MCF 10A (cell line): ENCODE measurements at regions of chrX and their contacts with region 1.

Region 1: GRCh38 chrX:13750204-13750603 is 15.7 kb downstream of the OFD1 start:
- DNase-seq: peak; percentile 77
- H3K4me3 Mint-ChIP-seq: no peak overlapping the region
- H3K27ac Mint-ChIP-seq: no peak overlapping the region
- H3K4me1 Mint-ChIP-seq: peaks cover 6% of the 10 kb centered on the region
- H3K27me3 Mint-ChIP-seq: no peaks in the 10 kb centered on the region
- CTCF ChIP-seq: peak; percentile 62

Region 2: GRCh38 chrX:13658602-13659001 is 91.6 kb before region 1 on chrX:
- CTCF ChIA-PET with region 1: interaction called, 4 read pairs
- POLR2A ChIA-PET with region 1: interaction called, 7 read pairs
- intact Hi-C with region 1: loop called (anchors 1 kb)
- DNase-seq: peak; percentile 79
- H3K4me3 Mint-ChIP-seq: no peak overlapping the region
- H3K27ac Mint-ChIP-seq: peak overlapping the region; percentile 23
- H3K4me1 Mint-ChIP-seq: peaks cover 10% of the 10 kb centered on the region
- H3K27me3 Mint-ChIP-seq: peaks cover 12% of the 10 kb centered on the region
- CTCF ChIP-seq: peak; percentile 66

Region 3: DNA sequence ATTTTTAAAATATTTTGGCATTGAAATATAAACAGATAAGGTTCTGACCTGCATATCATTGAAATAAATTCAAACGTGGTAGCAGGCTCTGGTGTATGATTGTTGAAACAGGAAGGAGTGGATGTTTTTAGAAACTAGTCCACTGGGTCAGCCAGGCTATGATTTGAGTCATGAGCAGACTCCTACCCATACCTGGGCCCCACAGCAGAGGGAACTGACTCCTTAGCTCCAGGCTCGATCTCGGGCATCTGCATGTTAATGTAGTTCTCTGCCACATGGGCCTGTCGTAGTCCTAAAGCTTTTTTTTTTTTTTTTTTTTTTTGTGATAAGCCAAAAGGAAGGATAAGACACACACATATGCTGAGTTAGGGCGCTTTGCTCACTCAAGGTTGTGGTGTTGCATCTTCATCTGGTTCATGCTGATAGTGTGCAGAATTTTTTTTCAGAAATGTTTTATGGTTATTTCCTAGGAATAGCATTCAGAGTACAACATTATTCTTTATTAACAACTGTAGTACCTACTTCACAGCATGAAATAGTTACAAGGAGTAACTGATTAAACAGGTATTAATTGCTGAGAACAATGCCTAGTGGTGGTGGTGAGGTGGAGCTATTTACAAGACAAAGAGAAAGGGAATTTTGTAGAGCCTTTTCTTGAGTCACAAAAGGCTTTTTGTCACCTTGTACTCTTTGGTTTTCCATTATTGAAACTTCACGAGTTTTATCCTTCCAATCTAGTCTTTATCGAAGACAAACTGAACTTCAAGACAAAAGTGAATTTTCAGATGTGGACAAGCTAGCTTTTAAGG is 11.6 kb after region 1 on chrX:
- CTCF ChIA-PET with region 1: interaction called, 10 read pairs
- POLR2A ChIA-PET with region 1: interaction called, 3 read pairs
- intact Hi-C with region 1: no loop called
- DNase-seq: no peak
- H3K4me3 Mint-ChIP-seq: no peak overlapping the region
- H3K27ac Mint-ChIP-seq: no peak overlapping the region
- H3K4me1 Mint-ChIP-seq: no peaks in the 10 kb centered on the region
- H3K27me3 Mint-ChIP-seq: no peaks in the 10 kb centered on the region
- CTCF ChIP-seq: no peak

Region 4: DNA sequence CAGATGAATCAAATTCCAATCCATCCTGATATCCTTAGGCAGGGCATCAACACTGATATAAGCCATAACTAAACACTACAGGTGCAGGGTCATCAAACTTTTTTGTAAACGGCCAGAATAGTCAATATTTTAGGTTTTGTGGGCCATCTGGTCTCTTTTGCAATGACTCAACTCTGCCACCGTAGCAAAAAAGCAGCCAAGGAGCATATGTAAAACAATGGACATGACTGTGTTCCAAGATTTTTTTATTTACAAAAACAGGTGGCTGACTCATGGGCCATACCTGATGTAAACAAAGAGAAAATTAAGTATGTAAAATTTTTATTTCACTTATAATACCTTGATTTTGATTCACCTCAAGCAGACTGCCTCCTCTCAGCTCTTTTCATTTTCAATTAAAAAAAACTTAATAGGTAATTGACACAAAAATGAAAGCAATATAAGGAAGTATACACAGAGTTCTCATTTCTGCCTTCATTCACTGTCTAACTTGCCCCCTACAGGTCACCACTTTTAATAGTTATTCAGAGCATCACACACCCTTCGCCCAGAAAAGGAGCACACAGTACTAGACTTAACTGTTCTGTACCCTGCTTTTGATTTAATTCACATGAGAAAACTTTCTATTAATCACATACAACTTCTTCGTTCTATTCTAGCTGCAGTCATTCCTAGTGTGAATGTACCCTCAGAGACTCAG is 101.9 kb after region 1 on chrX:
- CTCF ChIA-PET with region 1: interaction called, 8 read pairs
- POLR2A ChIA-PET with region 1: no interaction called
- intact Hi-C with region 1: loop called (anchors 1 kb)
- DNase-seq: peak; percentile 55
- H3K4me3 Mint-ChIP-seq: no peak overlapping the region
- H3K27ac Mint-ChIP-seq: no peak overlapping the region
- H3K4me1 Mint-ChIP-seq: peaks cover 6% of the 10 kb centered on the region
- H3K27me3 Mint-ChIP-seq: peaks cover 66% of the 10 kb centered on the region
- CTCF ChIP-seq: peak; percentile 10

Region 5: DNA sequence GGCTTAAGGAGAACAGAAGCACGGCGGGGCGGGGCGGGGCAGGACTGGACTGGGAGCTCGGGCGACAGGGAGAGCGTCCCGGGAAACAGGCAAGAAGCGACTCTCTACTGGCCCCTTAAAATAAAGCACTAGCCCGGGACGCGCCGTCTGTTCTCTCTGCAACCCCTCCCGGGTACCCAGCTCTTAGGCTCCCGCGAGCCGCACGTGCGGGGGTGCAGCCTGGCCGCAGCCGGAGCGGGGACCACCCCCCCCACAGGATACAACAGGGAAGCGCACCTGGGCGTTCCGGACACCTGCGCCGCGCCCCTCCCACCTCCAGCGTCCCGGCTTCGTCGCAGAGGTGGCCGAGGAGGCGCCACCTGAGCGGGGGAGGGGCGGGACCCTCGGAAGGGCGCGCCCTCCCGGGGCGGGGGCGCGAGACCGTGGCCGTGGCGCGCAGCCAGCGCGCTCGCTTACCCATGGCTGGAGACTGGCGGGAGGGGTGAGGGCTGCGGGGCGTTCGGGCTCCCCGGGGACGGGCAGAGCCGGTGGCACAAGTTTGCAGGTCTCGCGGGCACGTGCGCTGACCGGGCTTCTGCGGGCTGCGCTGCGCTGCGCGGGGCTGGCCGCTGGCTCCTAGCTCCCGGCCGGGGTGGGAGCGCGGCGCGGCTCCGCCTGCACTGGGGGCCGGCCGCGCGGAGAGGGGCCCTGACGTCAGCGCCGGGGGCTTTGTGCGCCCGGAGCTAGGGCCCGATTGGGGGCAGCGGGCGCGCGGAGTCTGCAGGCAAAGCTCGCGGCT is 188.0 kb after region 1 on chrX:
- CTCF ChIA-PET with region 1: interaction called, 3 read pairs
- POLR2A ChIA-PET with region 1: interaction called, 4 read pairs
- intact Hi-C with region 1: loop called (anchors 5 kb)
- DNase-seq: peak; percentile 40
- H3K4me3 Mint-ChIP-seq: peak overlapping the region; percentile 81
- H3K27ac Mint-ChIP-seq: peak overlapping the region; percentile 79
- H3K4me1 Mint-ChIP-seq: peaks cover 5% of the 10 kb centered on the region
- H3K27me3 Mint-ChIP-seq: peaks cover 56% of the 10 kb centered on the region
- CTCF ChIP-seq: no peak

Region 6: GRCh38 chrX:14386981-14387380 is 636.8 kb after region 1 on chrX:
- CTCF ChIA-PET with region 1: no interaction called
- POLR2A ChIA-PET with region 1: no interaction called
- intact Hi-C with region 1: no loop called
- DNase-seq: no peak
- H3K4me3 Mint-ChIP-seq: no peak overlapping the region
- H3K27ac Mint-ChIP-seq: no peak overlapping the region
- H3K4me1 Mint-ChIP-seq: no peaks in the 10 kb centered on the region
- H3K27me3 Mint-ChIP-seq: no peaks in the 10 kb centered on the region
- CTCF ChIP-seq: no peak